ENCODE measurements at regions of chr11 and their contacts with region 1.

Region 1: GRCh38 chr11:87421422-87421821 is 383.7 kb downstream of the TMEM135 start:
- DNase-seq: peak; percentile 91
- H3K4me3 ChIP-seq: no peak overlapping the region
- H3K27ac ChIP-seq: no peak overlapping the region
- H3K4me1 ChIP-seq: peaks cover 0 to 10% (median 5%) of the 10 kb centered on the region in 4 donors
- H3K27me3 ChIP-seq: no peaks in the 10 kb centered on the region
- CTCF ChIP-seq: peak; percentile 63 to 79 (median 74)
- EP300 ChIP-seq: no peak
- POLR2A ChIP-seq: no peak

Region 2: GRCh38 chr11:86938900-86939880 is 482.2 kb before region 1 on chr11:
- intact Hi-C with region 1: loop called (anchors 10 kb)
- DNase-seq: no peak
- H3K4me3 ChIP-seq: peak overlapping the region in 1 of 4 donors; percentile 27
- H3K27ac ChIP-seq: peak overlapping the region; percentile 72 to 80 (median 77)
- H3K4me1 ChIP-seq: peaks cover 46 to 86% (median 73%) of the 10 kb centered on the region in 4 donors
- H3K27me3 ChIP-seq: no peaks in the 10 kb centered on the region
- CTCF ChIP-seq: peak; percentile 61 to 79 (median 70)
- EP300 ChIP-seq: no peak
- POLR2A ChIP-seq: no peak

Region 3: GRCh38 chr11:87352759-87353707 is 68.4 kb before region 1 on chr11:
- intact Hi-C with region 1: loop called (anchors 1 kb)
- DNase-seq: no peak
- H3K4me3 ChIP-seq: no peak overlapping the region
- H3K27ac ChIP-seq: no peak overlapping the region
- H3K4me1 ChIP-seq: peaks cover 15 to 32% (median 23%) of the 10 kb centered on the region in 4 donors
- H3K27me3 ChIP-seq: no peaks in the 10 kb centered on the region
- CTCF ChIP-seq: peak in 2 of 3 experiments; percentile 96 to 99
- EP300 ChIP-seq: no peak
- POLR2A ChIP-seq: no peak

Measured in esophagus muscularis mucosa (tissue), 4 donors.